ENCODE measurements at regions of chr3 and their contacts with region 1.

Region 1: DNA sequence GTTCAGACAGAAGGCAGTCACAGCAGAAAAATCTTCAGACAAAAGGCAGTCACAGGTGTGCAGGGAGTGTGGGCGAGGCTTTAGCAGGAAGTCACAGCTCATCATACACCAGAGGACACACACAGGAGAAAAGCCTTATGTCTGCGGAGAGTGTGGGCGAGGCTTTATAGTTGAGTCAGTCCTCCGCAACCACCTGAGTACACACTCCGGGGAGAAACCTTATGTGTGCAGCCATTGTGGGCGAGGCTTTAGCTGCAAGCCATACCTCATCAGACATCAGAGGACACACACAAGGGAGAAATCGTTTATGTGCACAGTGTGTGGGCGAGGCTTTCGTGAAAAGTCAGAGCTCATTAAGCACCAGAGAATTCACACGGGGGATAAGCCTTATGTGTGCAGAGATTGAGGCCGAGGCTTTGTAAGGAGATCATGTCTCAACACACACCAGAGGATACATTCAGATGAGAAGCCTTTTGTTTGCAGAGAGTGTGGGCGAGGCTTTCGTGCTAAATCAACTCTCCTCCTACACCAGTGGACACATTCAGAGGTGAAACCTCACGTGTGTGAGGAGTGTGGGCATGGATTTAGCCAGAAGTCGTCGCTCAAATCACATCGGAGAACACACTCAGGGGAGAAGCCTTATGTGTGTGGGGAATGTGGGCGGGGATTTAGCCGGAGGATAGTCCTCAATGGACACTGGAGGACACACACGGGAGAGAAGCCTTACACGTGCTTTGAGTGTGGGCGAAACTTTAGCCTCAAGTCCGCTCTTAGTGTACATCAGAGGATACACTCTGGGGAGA is 27.7 kb downstream of the ZNF589 start:
- DNase-seq: no peak
- H3K4me3 ChIP-seq: no peak overlapping the region
- H3K27ac ChIP-seq: no peak overlapping the region
- H3K4me1 ChIP-seq: no peaks in the 10 kb centered on the region; a peak in 2 of 7 replicates
- H3K27me3 ChIP-seq: no peaks in the 10 kb centered on the region
- CTCF ChIP-seq: no peak
- EP300 ChIP-seq: no peak
- POLR2A ChIP-seq: no peak
- RAD21 ChIP-seq: no peak

Region 2: DNA sequence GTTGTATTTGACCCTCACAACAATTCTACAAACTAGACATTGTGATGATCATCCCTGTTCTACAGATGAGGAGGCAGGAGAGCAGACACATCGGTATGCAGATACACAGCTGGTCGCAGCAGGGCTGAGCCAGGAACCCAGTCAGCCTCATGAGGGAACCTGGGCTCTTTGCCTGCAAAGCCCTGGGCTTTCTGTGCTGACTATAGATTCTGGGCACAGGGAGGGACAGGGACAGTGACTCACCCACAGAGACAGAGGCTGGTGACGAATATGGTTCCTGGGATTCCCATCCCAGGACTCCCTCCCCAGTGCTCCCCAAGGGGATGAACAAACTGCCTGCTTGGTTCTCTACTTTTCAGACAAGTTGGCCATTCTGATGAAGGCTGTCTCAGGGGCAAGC is 49.0 kb before region 1 on chr3:
- CTCF ChIA-PET with region 1: no interaction called
- POLR2A ChIA-PET with region 1: no interaction called
- DNase-seq: no peak
- H3K4me3 ChIP-seq: no peak overlapping the region
- H3K27ac ChIP-seq: no peak overlapping the region
- H3K4me1 ChIP-seq: no peaks in the 10 kb centered on the region
- H3K27me3 ChIP-seq: peaks cover 0 to 4% (median 0%) of the 10 kb centered on the region in 4 experiments; a peak in 1 of 7 replicates
- CTCF ChIP-seq: no peak
- EP300 ChIP-seq: no peak
- POLR2A ChIP-seq: no peak
- RAD21 ChIP-seq: no peak

Region 3: GRCh38 chr3:48247401-48247811 is 21.2 kb before region 1 on chr3:
- CTCF ChIA-PET with region 1: interaction called, 14 read pairs
- POLR2A ChIA-PET with region 1: interaction called, 11 read pairs
- DNase-seq: no peak
- H3K4me3 ChIP-seq: no peak overlapping the region
- H3K27ac ChIP-seq: no peak overlapping the region
- H3K4me1 ChIP-seq: peaks cover 2 to 8% (median 2%) of the 10 kb centered on the region in 4 experiments; a peak in 6 of 7 replicates
- H3K27me3 ChIP-seq: no peaks in the 10 kb centered on the region
- CTCF ChIP-seq: no peak
- EP300 ChIP-seq: no peak
- POLR2A ChIP-seq: no peak
- RAD21 ChIP-seq: no peak

Region 4: GRCh38 chr3:48256557-48256956 is 12.0 kb before region 1 on chr3:
- CTCF ChIA-PET with region 1: interaction called, 14 read pairs
- POLR2A ChIA-PET with region 1: interaction called, 29 read pairs
- DNase-seq: no peak
- H3K4me3 ChIP-seq: no peak overlapping the region
- H3K27ac ChIP-seq: no peak overlapping the region; the same call in 1 of the 2 replicates
- H3K4me1 ChIP-seq: no peaks in the 10 kb centered on the region
- H3K27me3 ChIP-seq: no peaks in the 10 kb centered on the region
- CTCF ChIP-seq: no peak
- EP300 ChIP-seq: no peak
- POLR2A ChIP-seq: no peak
- RAD21 ChIP-seq: no peak

Region 5: GRCh38 chr3:48334605-48335004 is 66.0 kb after region 1 on chr3:
- CTCF ChIA-PET with region 1: no interaction called
- POLR2A ChIA-PET with region 1: no interaction called
- DNase-seq: no peak
- H3K4me3 ChIP-seq: no peak overlapping the region
- H3K27ac ChIP-seq: no peak overlapping the region
- H3K4me1 ChIP-seq: no peaks in the 10 kb centered on the region
- H3K27me3 ChIP-seq: no peaks in the 10 kb centered on the region; a peak in 1 of 7 replicates
- CTCF ChIP-seq: no peak
- EP300 ChIP-seq: no peak
- POLR2A ChIP-seq: no peak
- RAD21 ChIP-seq: no peak